ENCODE measurements at regions of chr6 and their contacts with region 1.

Region 1: DNA sequence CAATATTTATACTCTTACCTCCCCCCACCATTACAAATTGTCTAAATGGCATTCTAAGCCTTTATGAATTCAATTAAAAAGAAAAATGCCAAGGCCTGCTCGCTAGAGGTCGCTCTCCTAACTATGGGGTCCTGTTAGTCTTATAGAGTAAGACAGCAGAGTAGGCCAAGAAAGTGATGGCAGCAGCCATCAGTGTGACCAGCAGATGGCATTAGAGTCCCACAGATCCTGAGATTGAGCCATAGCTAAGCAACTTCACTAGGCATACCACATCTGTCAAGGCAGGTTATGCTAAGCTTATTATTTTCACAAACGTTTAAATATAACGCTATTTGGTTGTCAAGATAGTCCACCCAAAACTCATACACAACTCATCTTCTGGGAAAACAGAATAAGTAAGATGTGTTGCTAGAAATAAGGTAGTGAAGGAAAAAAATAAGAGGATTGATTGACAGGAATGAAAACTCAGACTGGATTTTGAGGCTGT is 57.6 kb upstream of the SCAF8 start:
- DNase-seq: peak; percentile 86 to 88
- H3K4me3 ChIP-seq: no peak overlapping the region
- H3K4me3 Mint-ChIP-seq: no peak overlapping the region
- H3K27ac Mint-ChIP-seq: no peak overlapping the region
- H3K4me1 ChIP-seq: no peaks in the 10 kb centered on the region
- H3K4me1 Mint-ChIP-seq: no peaks in the 10 kb centered on the region
- H3K27me3 ChIP-seq: no peaks in the 10 kb centered on the region
- H3K27me3 Mint-ChIP-seq: no peaks in the 10 kb centered on the region
- CTCF ChIP-seq: peak; percentile 95 to 98

Region 2: DNA sequence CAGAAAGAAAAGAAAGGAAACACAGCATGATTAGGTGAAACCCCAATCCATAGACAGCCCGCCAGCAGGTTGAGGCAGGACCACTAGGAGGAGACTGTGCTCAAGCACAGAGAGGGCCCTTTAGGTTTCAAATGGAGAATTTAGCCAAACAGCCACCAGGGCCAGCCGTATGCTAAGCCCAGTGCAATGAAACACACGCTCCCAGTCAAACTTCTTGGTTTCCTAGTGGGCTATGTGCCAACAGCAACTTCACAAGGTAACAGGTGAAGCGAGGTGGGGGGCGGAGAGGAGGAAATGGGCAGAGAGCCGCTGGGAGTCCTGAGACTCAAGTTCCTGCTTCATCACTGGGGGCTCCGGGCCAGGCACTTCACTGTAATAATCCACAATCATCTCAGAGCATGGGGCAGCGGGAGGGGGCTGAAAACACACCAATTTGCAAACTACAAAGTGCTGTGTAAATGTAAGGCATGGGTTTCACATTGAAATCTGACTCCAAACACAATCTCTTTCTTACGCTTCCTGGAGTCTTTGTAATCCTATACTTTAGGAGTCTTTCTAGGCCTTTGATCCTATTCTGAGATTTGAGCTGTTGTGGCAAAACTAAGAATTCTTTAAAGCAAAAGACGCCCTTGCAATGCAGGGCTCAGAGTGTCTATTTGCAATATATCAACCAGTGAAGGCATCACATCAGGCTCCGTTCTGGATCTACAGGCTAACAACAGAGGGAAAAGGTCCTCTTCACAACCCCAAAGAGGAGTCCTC is 519.3 kb before region 1 on chr6:
- CTCF ChIA-PET with region 1: no interaction called
- POLR2A ChIA-PET with region 1: no interaction called
- intact Hi-C with region 1: loop called (anchors 1 kb)
- DNase-seq: peak; percentile 36 to 55
- H3K4me3 ChIP-seq: no peak overlapping the region
- H3K4me3 Mint-ChIP-seq: no peak overlapping the region
- H3K27ac Mint-ChIP-seq: no peak overlapping the region
- H3K4me1 ChIP-seq: no peaks in the 10 kb centered on the region
- H3K4me1 Mint-ChIP-seq: no peaks in the 10 kb centered on the region
- H3K27me3 ChIP-seq: no peaks in the 10 kb centered on the region
- H3K27me3 Mint-ChIP-seq: no peaks in the 10 kb centered on the region
- CTCF ChIP-seq: peak; percentile 41 to 65

Region 3: DNA sequence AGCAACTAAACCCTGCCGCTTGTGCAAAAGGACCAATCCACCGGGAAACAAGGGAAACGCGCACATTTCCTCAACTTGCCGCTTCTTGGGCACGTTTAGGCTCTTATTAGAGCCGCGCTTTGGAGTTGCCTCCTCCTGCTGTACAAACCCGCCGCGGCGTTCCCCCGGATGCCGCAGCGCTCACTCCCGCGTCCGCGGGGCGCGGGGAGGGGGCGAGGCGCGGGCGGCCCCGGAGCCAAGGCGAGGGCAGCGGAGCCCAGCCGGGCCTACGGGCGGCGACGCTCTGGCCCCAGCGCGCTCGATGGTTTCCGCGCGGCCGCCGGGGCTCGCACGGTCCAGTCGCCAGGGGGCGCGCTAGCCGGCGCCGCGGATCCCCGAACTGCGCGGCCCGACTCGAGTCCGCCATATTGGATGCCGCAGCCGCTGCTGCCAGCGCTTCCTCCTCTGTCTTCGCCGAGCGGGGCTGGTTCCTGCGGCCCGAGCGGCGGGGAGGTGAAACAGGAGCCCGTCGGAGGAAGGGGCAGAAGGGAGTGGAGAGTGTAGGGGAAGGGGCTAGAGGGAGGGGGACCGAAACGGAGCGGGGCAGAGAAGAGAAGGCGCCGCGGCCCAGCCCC is 57.5 kb after region 1 on chr6 and contains the start of gene SCAF8:
- CTCF ChIA-PET with region 1: interaction called, 3 read pairs
- POLR2A ChIA-PET with region 1: no interaction called
- intact Hi-C with region 1: loop called (anchors 1 kb)
- DNase-seq: peak; percentile 67 to 92
- H3K4me3 ChIP-seq: peak within 1 kb of the TSS; percentile 92
- H3K4me3 Mint-ChIP-seq: peak within 1 kb of the TSS; percentile 84
- H3K27ac Mint-ChIP-seq: peak within 1 kb of the TSS; percentile 89
- H3K4me1 ChIP-seq: peaks cover 13% of the 10 kb centered on the region
- H3K4me1 Mint-ChIP-seq: peaks cover 12% of the 10 kb centered on the region
- H3K27me3 ChIP-seq: no peaks in the 10 kb centered on the region
- H3K27me3 Mint-ChIP-seq: no peaks in the 10 kb centered on the region
- CTCF ChIP-seq: peak; percentile 53 to 79
- total RNA-seq, gene SCAF8: 45.2 and 45.9 TPM in 2 replicates

Region 4: GRCh38 chr6:154868143-154868594 is 192.5 kb after region 1 on chr6:
- CTCF ChIA-PET with region 1: interaction called, 11 read pairs
- POLR2A ChIA-PET with region 1: no interaction called
- intact Hi-C with region 1: loop called (anchors 1 kb)
- DNase-seq: peak in 1 of 2 experiments; percentile 46
- H3K4me3 ChIP-seq: no peak overlapping the region
- H3K4me3 Mint-ChIP-seq: no peak overlapping the region
- H3K27ac Mint-ChIP-seq: no peak overlapping the region
- H3K4me1 ChIP-seq: peaks cover 8% of the 10 kb centered on the region
- H3K4me1 Mint-ChIP-seq: peaks cover 10% of the 10 kb centered on the region
- H3K27me3 ChIP-seq: no peaks in the 10 kb centered on the region
- H3K27me3 Mint-ChIP-seq: no peaks in the 10 kb centered on the region
- CTCF ChIP-seq: peak; percentile 66 to 75

Region 5: DNA sequence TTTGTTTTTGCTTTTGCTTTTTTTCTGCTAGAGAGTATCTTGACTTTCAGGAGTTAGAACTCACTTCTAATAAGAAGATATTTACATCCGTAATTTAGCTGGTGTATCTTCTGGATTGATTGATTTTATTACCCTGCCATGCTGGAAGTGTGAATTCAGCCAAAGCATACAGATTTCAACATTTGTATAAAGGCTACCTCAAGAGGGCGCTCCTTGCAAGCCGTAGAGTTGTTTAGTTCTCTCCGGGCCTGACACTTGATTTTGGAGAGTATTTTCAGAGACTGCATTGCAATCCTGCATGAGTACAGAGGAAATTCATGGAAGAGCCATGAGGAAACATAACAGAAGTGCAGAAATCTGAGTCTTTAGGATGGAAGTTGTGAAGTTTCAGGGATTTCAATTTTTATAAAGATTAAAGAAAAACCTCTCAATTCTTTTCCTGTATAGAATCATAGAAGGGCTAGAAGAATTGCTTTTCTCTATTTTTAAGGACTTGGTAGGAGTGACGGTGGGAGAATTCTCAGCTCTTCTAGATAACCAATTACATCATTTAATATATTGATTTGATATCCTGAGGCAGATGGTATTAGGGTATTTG is 252.8 kb after region 1 on chr6:
- CTCF ChIA-PET with region 1: interaction called, 6 read pairs
- POLR2A ChIA-PET with region 1: no interaction called
- intact Hi-C with region 1: loop called (anchors 1 kb)
- DNase-seq: peak; percentile 47 to 71
- H3K4me3 ChIP-seq: no peak overlapping the region
- H3K4me3 Mint-ChIP-seq: no peak overlapping the region
- H3K27ac Mint-ChIP-seq: no peak overlapping the region
- H3K4me1 ChIP-seq: peaks cover 25% of the 10 kb centered on the region
- H3K4me1 Mint-ChIP-seq: peaks cover 21% of the 10 kb centered on the region
- H3K27me3 ChIP-seq: no peaks in the 10 kb centered on the region
- H3K27me3 Mint-ChIP-seq: no peaks in the 10 kb centered on the region
- CTCF ChIP-seq: peak; percentile 74 to 77